Heart right ventricle (tissue), 16 donors: ENCODE measurements at regions of chr3 and their contacts with region 1.

Region 1: DNA sequence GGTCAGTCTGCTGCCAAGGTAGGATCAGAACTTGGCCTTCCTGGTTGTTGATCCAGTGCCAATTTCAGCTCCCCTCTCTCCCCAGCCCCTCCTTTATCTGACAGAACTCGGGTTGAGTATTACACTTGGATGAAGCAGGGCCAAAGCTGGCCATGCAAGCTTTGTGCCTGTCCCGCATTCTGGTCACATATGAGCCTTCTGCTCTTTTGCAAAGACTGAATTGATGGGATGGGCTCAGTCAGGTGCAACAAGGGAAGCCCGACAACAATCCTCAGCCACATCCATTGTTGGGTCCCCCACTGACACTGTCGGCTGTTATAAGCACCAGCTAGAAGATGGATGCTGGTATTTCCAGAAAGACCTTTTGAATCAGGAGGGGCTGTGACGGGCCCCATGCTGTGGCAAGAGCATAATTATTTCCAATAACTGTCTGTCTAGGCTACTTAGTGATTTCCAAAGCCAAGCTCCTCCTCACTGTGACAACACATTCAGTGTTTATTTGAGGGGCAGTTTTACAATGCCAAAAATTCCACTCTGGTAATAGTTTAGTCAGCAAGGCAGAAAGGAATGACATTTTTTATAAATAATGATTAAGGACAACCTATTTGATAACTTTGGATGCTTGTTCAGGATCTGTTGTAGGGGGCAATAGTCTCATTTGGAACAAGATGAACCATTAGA is 146.8 kb upstream of the FRMD4B start:
- DNase-seq: no peak
- ATAC-seq: peak in 4 of 8 donors; percentile 28 to 44 (median 33)
- H3K4me3 ChIP-seq: no peak overlapping the region
- H3K27ac ChIP-seq: peak overlapping the region in 1 of 10 donors; percentile 15
- H3K4me1 ChIP-seq: peaks cover 0 to 22% (median 8%) of the 10 kb centered on the region in 9 donors
- H3K27me3 ChIP-seq: no peaks in the 10 kb centered on the region
- CTCF ChIP-seq: no peak

Region 2: DNA sequence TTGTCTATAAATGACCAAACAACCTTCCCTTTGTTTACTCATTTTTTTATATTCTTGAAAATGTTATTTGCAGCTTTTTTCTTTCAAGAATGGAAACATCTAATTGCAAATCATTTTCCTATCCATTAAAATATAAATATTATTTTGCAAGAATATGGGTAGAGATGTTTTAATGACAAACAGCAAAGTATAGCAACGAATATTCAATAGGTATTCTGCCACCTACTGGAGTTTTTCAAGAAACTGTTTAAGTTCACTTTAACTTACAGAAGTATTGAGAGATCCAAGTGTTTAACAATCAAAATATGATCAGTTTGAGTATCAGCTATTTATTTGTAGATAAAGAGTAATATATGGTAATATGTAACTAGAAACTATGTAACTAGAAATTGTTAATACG is 512.3 kb before region 1 on chr3:
- intact Hi-C with region 1: no loop called
- DNase-seq: no peak
- ATAC-seq: no peak
- H3K4me3 ChIP-seq: no peak overlapping the region
- H3K27ac ChIP-seq: no peak overlapping the region
- H3K4me1 ChIP-seq: peaks cover 0 to 3% (median 0%) of the 10 kb centered on the region in 9 donors
- H3K27me3 ChIP-seq: no peaks in the 10 kb centered on the region
- CTCF ChIP-seq: peak in 6 of 9 donors; percentile 21 to 49 (median 40)

Region 3: GRCh38 chr3:69451594-69451993 is 81.1 kb before region 1 on chr3:
- intact Hi-C with region 1: loop called in 1 of 10 experiments (anchors 10 kb)
- DNase-seq: no peak
- ATAC-seq: peak in 3 of 8 donors; percentile 37 to 74 (median 56)
- H3K4me3 ChIP-seq: no peak overlapping the region
- H3K27ac ChIP-seq: no peak overlapping the region
- H3K4me1 ChIP-seq: peaks cover 0 to 23% (median 6%) of the 10 kb centered on the region in 9 donors
- H3K27me3 ChIP-seq: no peaks in the 10 kb centered on the region
- CTCF ChIP-seq: peak in 6 of 9 donors; percentile 14 to 40 (median 24)